ENCODE measurements at regions of chr1 and their contacts with region 1.

Region 1: DNA sequence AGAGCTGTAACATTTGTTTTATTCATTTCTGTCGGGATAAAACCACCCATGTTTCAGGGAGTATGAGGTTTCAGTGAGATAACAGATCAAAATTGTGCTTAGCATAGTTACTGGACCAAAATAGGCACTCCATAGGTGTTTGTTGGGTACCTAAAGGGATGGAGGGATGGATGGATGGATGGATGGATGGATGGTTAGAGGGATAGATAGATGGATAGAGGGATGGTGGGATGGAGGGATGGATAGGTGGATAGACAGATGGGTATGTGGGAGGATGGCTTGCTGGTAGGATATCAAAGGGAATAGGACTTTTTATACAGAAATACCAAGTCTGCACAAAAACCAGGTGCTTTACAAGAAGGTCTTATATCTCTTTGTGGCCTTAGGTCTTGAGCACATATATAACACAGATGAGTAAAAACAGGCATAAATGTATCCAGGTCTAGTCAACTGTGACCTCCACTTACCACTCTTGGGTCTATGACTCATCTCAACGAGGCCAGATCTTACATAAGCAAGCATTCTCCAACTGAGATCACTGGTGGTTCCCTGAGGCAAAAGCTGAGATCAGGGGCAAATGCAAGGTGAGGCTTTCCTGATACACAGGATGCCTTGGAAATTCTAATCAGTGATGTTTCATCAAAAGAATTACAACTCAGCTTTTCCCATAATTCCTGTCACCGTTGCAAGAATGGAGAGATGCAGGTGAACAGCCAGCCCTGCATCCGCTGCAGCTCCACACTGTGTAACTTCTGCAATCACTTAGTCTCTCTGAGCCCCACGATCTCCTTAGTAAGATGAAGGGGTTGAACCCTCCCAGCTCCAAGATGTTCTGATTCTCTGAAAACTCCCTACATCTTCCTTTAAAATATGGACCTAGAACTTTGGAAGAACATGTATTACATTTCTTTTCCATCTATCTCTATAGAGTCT is 32.0 kb downstream of the PTAFR start:
- DNase-seq: no peak

Region 2: DNA sequence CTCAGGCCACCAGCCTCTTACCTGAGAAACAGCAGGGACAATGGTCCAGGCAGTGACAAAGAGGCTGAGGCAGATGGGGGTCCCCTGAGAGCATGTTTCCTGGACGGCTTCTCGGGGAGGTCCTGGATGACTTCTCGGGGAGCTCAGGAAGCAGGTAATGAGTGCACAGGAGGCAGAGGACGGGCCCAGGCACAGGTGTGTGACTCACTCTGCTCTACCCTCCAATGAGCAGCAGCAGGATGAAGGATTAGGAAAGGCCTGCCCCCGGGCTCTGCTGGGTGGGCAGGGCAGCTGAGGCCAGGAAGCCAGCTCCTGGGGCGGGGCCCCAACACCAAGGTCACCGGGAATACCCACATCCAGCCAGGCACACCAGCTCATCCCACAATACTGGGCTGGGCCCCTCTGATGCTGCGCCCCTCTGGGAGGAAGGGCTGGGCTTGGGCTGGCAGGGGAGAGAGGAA is 49.3 kb after region 1 on chr1:
- intact Hi-C with region 1: loop called in 1 of 2 experiments (anchors 1 kb)
- DNase-seq: no peak

Region 3: DNA sequence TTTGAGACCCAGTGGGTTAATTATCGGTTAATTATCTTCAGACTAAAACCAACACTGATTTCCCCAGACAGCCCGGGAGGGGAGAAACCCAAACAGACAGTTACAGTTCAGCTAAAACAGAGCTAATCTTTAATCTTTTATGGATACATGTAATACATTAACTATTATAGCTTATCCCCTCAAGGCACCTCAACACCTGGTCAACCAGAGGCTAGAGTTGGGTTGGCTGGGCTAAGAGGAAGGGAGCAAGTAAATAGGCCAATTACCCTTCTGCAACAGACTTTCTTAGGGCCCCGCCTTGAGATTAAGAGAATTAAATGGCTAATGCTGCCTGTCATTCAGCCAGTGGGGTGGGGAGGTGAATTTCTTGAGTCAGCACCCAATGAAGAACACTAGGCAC is 177.7 kb after region 1 on chr1:
- intact Hi-C with region 1: loop called in 1 of 2 experiments (anchors 5 kb)
- DNase-seq: peak; percentile 19

Measured in posterior vena cava (tissue), 2 donors.